Heart left ventricle (tissue), 16 donors: ENCODE measurements at regions of chr21 and their contacts with region 1.

Region 1: GRCh38 chr21:26170471-26171257 is at the start of gene APP:
- DNase-seq: peak; percentile 84 to 93 (median 91)
- ATAC-seq: peak; percentile 74 to 90 (median 82)
- H3K4me3 ChIP-seq: peak within 1 kb of the TSS; percentile 55 to 97 (median 81)
- H3K27ac ChIP-seq: peak within 1 kb of the TSS; percentile 75 to 96 (median 92)
- H3K4me1 ChIP-seq: peaks cover 0 to 42% (median 30%) of the 10 kb centered on the region in 12 donors
- H3K27me3 ChIP-seq: no peaks in the 10 kb centered on the region
- CTCF ChIP-seq: peak; percentile 73 to 100 (median 99)
- POLR2A ChIP-seq: peak in 1 of 2 donors; percentile 86
- total RNA-seq, gene APP: 271 to 467 (median 381) TPM

Region 2: DNA sequence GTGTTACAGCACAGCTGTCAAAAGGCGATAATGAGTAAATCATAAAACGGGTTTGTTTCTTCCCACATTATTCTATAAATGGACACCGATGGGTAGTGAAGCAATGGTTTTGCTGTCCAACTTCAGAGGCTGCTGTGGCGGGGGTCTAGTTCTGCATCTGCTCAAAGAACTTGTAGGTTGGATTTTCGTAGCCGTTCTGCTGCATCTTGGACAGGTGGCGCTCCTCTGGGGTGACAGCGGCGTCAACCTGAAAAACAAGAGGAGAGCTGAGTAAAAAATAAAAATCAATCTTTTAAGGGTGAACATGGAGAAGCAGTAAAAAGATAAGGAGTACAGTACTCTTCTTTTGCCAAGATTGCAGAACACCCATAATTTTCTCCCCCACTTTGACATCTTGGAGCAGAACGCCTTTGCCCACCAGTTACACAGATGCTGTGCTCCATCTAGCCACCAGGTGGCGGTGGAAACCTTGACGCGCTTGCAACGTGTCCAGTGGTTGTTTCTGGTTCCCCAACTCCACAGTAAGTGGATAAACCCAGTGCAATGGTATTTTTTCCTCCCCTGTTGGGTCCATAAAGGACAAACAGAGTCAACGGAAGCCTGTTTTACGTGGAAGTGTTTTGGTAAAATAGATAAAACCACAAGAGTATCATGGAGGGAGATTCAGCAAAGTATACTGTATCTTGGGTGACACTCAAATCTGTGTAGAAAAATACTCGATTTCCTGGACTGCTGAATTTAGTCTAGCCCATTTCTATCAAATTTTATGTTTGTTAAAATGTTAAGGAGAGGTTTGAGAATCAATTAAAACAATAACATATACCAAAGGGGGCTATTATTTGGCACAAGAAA is 288.9 kb before region 1 on chr21:
- intact Hi-C with region 1: loop called in 9 of 10 experiments (anchors 1 to 5 kb)
- DNase-seq: peak; percentile 49 to 81 (median 68)
- ATAC-seq: peak; percentile 48 to 76 (median 76)
- H3K4me3 ChIP-seq: no peak overlapping the region
- H3K27ac ChIP-seq: no peak overlapping the region
- H3K4me1 ChIP-seq: peaks cover 0 to 20% (median 4%) of the 10 kb centered on the region in 12 donors
- H3K27me3 ChIP-seq: no peaks in the 10 kb centered on the region
- CTCF ChIP-seq: peak; percentile 88 to 98 (median 94)
- POLR2A ChIP-seq: no peak

Region 3: DNA sequence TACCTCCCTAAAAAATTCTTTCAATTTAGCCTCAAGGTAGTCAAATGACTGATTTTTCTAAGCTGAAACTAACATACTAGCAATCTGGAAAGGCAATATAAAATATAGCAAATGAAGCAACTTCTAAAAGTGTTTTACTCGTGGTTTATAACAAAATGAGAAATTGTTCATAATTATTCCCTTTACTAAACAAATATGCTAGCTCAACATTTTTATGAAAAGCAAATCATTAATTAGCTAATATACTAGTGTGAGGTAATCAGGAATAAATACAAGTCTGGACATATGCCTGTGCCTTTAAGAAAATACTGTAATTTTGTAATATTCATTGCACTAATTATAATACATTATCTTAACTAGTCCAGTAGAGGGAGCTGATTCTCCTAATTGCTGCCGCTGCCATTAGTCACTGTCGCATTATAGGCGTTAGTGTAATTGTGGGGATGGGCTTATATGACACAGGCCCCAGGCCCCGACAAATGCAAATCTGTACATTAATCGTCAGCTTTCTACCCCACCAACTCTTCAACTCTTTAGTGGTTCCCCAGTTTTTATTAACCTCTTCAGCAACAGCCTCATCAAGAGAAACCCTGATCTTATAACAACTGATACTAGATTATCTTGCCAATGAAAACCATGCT is 275.0 kb before region 1 on chr21:
- intact Hi-C with region 1: loop called in 7 of 10 experiments (anchors 1 to 5 kb)
- DNase-seq: no peak
- ATAC-seq: peak in 3 of 4 donors; percentile 74 to 85 (median 83)
- H3K4me3 ChIP-seq: no peak overlapping the region
- H3K27ac ChIP-seq: no peak overlapping the region
- H3K4me1 ChIP-seq: peaks cover 0 to 25% (median 7%) of the 10 kb centered on the region in 12 donors
- H3K27me3 ChIP-seq: no peaks in the 10 kb centered on the region
- CTCF ChIP-seq: peak; percentile 47 to 76 (median 64)
- POLR2A ChIP-seq: no peak

Region 4: DNA sequence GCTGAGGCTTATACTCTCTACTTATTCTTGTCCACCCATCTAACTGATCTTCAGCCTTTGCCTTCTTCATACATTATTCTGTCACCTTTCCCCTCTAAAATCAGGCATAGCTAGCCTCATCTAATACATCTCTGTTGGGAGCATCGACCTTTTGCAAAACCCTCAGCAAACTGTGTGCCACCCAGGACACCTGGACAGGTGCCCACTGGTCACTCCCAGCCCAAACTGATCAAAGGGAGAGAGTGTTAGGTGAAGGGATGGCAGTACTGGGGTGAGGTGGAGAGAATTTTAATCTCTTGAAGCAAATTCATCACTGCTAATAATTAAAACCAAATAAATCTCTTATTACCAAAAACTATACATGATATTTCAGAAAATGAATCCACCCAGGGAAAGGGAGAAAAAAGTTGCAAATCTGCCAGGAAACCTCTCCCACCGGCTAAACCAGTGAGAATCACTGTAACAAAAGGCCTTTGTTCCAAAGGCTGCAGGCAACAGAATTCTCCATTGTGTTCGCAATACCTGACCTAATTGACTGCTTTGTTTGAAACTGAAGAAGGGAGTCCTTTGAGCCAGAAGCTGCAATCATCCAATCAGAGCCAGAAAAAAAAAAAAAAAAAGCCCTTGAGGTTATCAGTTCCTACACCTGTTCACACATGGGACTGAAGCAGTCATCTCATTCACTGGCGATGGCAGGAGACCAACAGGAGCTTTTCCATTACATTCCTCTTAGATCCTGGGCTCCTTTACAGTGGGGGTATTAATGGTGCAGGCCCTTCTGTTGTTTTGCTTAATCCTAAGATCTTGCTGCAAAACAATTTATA is 172.7 kb before region 1 on chr21:
- intact Hi-C with region 1: loop called in 2 of 10 experiments (anchors 10 kb)
- DNase-seq: no peak
- ATAC-seq: peak in 2 of 4 donors; percentile 23 to 60
- H3K4me3 ChIP-seq: no peak overlapping the region
- H3K27ac ChIP-seq: peak overlapping the region in 2 of 12 donors; percentile 2 to 11
- H3K4me1 ChIP-seq: peaks cover 0 to 32% (median 3%) of the 10 kb centered on the region in 12 donors
- H3K27me3 ChIP-seq: no peaks in the 10 kb centered on the region
- CTCF ChIP-seq: no peak
- POLR2A ChIP-seq: no peak

Region 5: DNA sequence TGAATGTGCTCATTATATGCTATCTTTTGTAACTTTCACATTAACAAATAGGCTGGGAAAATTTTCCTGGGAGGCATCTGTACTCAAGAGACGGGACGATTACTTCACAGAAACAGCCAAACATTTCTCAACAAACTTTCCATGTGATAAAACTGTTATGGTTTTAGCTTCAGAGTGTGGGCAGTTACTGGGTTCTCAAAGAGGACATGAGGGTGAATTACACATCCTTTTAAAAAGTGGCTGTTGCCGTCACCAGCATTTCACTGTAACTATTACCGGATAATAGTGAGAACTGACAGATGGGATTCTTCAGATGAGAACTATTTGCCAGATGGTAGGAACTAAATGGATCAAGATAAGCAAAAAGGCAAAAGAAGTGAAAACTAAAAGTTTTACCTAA is 109.2 kb before region 1 on chr21:
- intact Hi-C with region 1: loop called in 2 of 10 experiments (anchors 5 to 10 kb)
- DNase-seq: peak in 1 of 5 donors; percentile 20
- ATAC-seq: peak in 3 of 4 donors; percentile 59 to 82 (median 70)
- H3K4me3 ChIP-seq: no peak overlapping the region
- H3K27ac ChIP-seq: peak overlapping the region in 6 of 12 donors; percentile 4 to 61 (median 44)
- H3K4me1 ChIP-seq: peaks cover 0 to 33% (median 12%) of the 10 kb centered on the region in 12 donors
- H3K27me3 ChIP-seq: no peaks in the 10 kb centered on the region
- CTCF ChIP-seq: no peak
- POLR2A ChIP-seq: no peak

Region 6: DNA sequence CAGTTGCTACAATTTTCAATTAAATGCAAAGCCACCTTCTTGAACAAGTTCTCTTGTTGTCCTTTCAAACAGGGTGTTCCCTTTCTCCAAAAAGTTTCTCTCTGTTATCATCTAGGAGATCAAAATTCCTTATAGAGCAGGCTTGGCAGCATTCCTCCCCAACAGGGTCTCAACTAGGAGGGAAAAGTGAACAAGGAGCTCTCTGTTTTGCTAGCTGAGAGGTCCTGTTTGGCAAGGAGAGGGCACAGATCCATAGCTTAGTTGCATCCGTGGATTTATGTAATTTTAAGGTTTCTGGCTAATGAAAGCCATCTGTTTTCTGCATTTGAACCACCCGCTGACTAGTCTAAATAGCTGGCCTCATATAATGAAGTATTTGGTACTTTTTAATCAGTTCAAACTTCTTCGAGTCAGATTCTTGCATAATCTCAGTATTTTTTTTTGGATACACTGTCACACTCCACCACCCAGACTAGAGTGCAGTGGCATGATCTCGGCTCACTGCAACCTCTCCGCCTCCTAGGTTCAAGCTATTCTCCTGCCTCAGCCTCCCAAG is 54.1 kb before region 1 on chr21:
- intact Hi-C with region 1: loop called in 4 of 10 experiments (anchors 5 to 10 kb)
- DNase-seq: no peak
- ATAC-seq: peak in 2 of 4 donors; percentile 27 to 34
- H3K4me3 ChIP-seq: peak overlapping the region in 1 of 12 donors; percentile 9
- H3K27ac ChIP-seq: peak overlapping the region; percentile 47 to 83 (median 64)
- H3K4me1 ChIP-seq: peaks cover 0 to 53% (median 31%) of the 10 kb centered on the region in 12 donors
- H3K27me3 ChIP-seq: no peaks in the 10 kb centered on the region
- CTCF ChIP-seq: no peak
- POLR2A ChIP-seq: no peak

Region 7: GRCh38 chr21:26572702-26573381 is 402.2 kb after region 1 on chr21 and contains the start of gene CYYR1:
- intact Hi-C with region 1: loop called in 2 of 10 experiments (anchors 10 kb)
- DNase-seq: peak in 4 of 5 donors; percentile 29 to 68 (median 38)
- ATAC-seq: peak in 3 of 4 donors; percentile 53 to 69 (median 55)
- H3K4me3 ChIP-seq: peak within 1 kb of the TSS; percentile 45 to 68 (median 60)
- H3K27ac ChIP-seq: peak within 1 kb of the TSS; percentile 75 to 91 (median 85)
- H3K4me1 ChIP-seq: no peaks in the 10 kb centered on the region
- H3K27me3 ChIP-seq: peaks cover 0 to 13% (median 8%) of the 10 kb centered on the region in 9 donors
- CTCF ChIP-seq: no peak
- POLR2A ChIP-seq: peak in 1 of 2 donors; percentile 43
- total RNA-seq, gene CYYR1: 12.1 to 37.6 (median 16.9) TPM